ENCODE measurements at regions of chr6 and their contacts with region 1.

Region 1: GRCh38 chr6:138431256-138432062 is 27.4 kb downstream of the HEBP2 start:
- DNase-seq: no peak
- H3K4me3 ChIP-seq: no peak overlapping the region
- H3K4me1 ChIP-seq: no peaks in the 10 kb centered on the region
- H3K27me3 ChIP-seq: no peaks in the 10 kb centered on the region

Region 2: DNA sequence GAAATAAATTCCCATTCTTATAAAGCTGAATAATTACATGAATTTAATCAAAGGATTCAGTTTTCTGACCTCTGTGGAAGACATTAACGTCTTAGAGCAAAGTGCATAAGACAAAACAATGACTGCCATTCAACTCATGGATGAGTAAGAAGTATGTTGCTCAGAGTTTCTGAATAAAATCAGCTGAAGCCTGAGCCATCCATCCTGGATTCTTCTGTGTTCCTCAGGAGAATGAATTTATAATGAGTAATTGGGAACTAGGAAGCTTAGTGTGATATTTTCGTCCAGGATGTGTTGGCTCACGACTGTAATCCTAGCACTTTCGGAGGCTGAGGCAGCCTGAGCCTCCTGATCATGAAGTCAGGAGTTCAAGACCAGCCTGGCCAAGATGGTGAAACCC is 387.0 kb before region 1 on chr6:
- in situ Hi-C with region 1: no loop called
- DNase-seq: no peak
- H3K4me3 ChIP-seq: no peak overlapping the region
- H3K4me1 ChIP-seq: 0 out of 2 replicates have a peak, but pooled peaks cover 3% of the 10 kb centered on the region
- H3K27me3 ChIP-seq: no peaks in the 10 kb centered on the region

Region 3: GRCh38 chr6:138517635-138518034 is 86.2 kb after region 1 on chr6:
- in situ Hi-C with region 1: loop called (anchors 5 kb)
- DNase-seq: peak in 1 of 2 experiments; percentile 60
- H3K4me3 ChIP-seq: no peak overlapping the region
- H3K4me1 ChIP-seq: peaks cover 19% of the 10 kb centered on the region
- H3K27me3 ChIP-seq: no peaks in the 10 kb centered on the region

Region 4: DNA sequence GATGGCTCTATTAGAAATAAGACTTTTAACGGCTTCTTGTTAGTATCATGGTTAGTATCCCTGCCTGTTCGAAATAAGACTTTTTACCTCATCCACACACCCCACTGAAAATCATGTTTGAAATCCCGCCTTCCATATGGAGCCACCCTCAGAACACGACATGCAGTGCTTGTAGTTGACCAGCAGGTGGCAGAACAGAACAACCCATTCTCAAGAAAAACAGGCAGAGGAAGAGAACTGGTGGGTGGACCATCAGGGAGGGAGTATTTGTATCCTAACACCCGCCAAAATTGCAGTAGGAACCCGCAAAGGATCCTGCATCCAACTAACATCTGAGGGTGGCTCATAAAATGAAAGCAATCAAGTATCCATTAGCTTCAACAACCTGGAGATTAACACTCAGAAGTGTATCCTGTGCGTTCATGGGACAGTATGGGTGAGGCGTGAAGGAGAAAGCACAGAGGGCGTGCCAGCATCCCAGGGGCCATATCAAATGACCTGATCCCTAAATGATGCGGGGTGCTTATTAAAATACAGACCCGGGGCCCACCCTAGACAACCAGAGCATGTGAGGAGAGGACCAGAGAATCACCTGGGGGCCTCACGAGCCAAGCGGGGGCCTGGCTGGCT is 157.5 kb after region 1 on chr6:
- in situ Hi-C with region 1: loop called (anchors 5 kb)
- DNase-seq: peak; percentile 76 to 77
- H3K4me3 ChIP-seq: no peak overlapping the region
- H3K4me1 ChIP-seq: peaks cover 21% of the 10 kb centered on the region
- H3K27me3 ChIP-seq: no peaks in the 10 kb centered on the region

Region 5: GRCh38 chr6:138765896-138766655 is 334.6 kb after region 1 on chr6:
- in situ Hi-C with region 1: loop called (anchors 10 kb)
- DNase-seq: peak in 1 of 2 experiments; percentile 53
- H3K4me3 ChIP-seq: no peak overlapping the region
- H3K4me1 ChIP-seq: no peaks in the 10 kb centered on the region
- H3K27me3 ChIP-seq: no peaks in the 10 kb centered on the region

Measured in HAP-1 (cell line).